Left colon (tissue), 2 donors: ENCODE measurements at regions of chr3 and their contacts with region 1.

Region 1: DNA sequence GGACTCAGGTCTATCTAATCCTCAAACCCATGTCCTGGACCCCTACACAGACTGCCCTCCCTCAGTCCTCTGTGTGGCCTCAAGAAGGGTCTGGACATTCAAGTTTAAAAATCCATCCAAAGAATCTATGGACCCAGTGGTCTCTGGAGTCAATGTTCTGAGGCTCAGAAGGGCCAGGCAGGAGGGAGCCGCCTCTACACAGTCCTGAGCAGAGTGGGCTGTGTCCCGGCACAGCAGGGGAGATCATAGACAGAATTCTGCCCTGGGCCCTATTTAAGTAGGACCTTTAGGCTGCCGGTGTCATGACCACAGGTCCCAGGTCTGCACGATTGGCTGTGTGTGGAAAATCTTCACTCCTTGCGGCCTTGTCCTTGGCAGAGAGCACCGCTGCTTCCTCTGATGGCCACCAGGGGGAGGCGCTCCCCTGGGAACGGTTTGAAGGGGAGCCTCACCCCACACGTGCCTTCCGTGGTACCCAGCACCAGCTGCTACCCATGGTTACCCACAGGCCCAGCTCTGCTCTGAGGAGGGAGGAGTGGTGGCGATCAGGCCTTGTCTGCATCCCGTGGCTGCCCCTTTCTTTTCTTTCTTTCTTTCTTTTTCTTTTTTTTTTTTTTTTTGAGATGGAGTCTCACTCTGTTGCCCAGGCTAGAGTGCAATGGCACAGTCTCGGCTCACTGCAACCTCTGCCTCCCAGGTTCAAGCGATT is 37.9 kb downstream of the CHRD start:
- DNase-seq: peak; percentile 54 to 79
- ATAC-seq: peak; percentile 96

Region 2: GRCh38 chr3:184491867-184492615 is 74.3 kb after region 1 on chr3:
- intact Hi-C with region 1: loop called in 1 of 2 experiments (anchors 10 kb)
- DNase-seq: peak in 1 of 2 donors; percentile 28
- ATAC-seq: no peak